CD4-positive, alpha-beta T cell (primary cell): ENCODE measurements at regions of chr16 and their contacts with region 1.

Region 1: GRCh38 chr16:50166511-50167500 is 13.7 kb downstream of the TENT4B start:
- DNase-seq: peak in 1 of 14 experiments; percentile 16
- ATAC-seq: no peak
- H3K4me3 ChIP-seq: no peak overlapping the region
- H3K4me3 Mint-ChIP-seq: peak overlapping the region; percentile 13
- H3K27ac ChIP-seq: no peak overlapping the region
- H3K27ac Mint-ChIP-seq: peak overlapping the region; percentile 57
- H3K4me1 ChIP-seq: peaks cover 24% of the 10 kb centered on the region
- H3K4me1 Mint-ChIP-seq: peaks cover 64% of the 10 kb centered on the region
- H3K27me3 ChIP-seq: no peaks in the 10 kb centered on the region
- H3K27me3 Mint-ChIP-seq: no peaks in the 10 kb centered on the region
- CTCF ChIP-seq: no peak

Region 2: DNA sequence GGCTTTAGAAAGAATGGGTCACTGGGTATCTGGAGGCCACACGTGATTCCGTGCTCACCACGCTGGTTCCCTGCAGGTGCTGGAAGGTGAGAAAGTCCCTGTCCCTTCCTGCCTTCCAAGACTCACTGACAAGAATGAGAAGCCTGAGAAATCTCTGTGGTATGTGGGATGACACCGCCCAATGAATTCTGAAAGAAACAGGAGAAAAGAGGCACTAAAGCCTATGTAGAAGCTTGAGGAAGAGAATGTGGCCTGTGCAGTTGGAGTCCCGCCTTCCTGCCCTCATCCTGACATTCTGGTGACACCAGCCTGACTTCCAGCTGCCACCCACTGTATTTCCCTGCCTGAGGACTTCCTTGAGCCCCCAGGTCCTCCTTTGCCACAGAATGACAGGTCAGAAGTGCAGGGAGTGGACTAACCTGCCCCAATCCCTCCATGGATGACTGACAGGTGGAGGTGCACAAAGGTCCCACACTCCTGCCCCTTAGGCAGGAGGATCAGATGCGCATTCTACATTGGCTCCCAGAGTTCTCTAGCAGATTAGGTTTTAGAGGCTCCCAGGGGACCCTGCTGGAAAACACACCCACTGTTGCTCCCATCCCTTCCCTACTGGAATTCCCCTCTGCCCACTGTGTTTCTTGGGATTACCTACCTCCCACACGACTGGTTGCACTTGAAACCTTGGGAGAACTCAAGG is 52.3 kb before region 1 on chr16:
- CTCF ChIA-PET with region 1: no interaction called
- POLR2A ChIA-PET with region 1: no interaction called
- intact Hi-C with region 1: no loop called
- DNase-seq: no peak
- ATAC-seq: no peak
- H3K4me3 ChIP-seq: no peak overlapping the region
- H3K4me3 Mint-ChIP-seq: no peak overlapping the region
- H3K27ac ChIP-seq: no peak overlapping the region
- H3K27ac Mint-ChIP-seq: no peak overlapping the region
- H3K4me1 ChIP-seq: no peaks in the 10 kb centered on the region
- H3K4me1 Mint-ChIP-seq: no peaks in the 10 kb centered on the region
- H3K27me3 ChIP-seq: no peaks in the 10 kb centered on the region
- H3K27me3 Mint-ChIP-seq: no peaks in the 10 kb centered on the region
- CTCF ChIP-seq: no peak

Region 3: GRCh38 chr16:50202926-50203624 is 36.3 kb after region 1 on chr16:
- CTCF ChIA-PET with region 1: no interaction called
- POLR2A ChIA-PET with region 1: no interaction called
- intact Hi-C with region 1: loop called (anchors 5 kb)
- DNase-seq: no peak
- ATAC-seq: no peak
- H3K4me3 ChIP-seq: no peak overlapping the region
- H3K4me3 Mint-ChIP-seq: no peak overlapping the region
- H3K27ac ChIP-seq: no peak overlapping the region
- H3K27ac Mint-ChIP-seq: peak overlapping the region; percentile 63
- H3K4me1 ChIP-seq: peaks cover 16% of the 10 kb centered on the region
- H3K4me1 Mint-ChIP-seq: peaks cover 70% of the 10 kb centered on the region
- H3K27me3 ChIP-seq: no peaks in the 10 kb centered on the region
- H3K27me3 Mint-ChIP-seq: no peaks in the 10 kb centered on the region
- CTCF ChIP-seq: no peak